CD4-positive, alpha-beta memory T cell (primary cell): ENCODE measurements at regions of chr17 and their contacts with region 1.

Region 1: DNA sequence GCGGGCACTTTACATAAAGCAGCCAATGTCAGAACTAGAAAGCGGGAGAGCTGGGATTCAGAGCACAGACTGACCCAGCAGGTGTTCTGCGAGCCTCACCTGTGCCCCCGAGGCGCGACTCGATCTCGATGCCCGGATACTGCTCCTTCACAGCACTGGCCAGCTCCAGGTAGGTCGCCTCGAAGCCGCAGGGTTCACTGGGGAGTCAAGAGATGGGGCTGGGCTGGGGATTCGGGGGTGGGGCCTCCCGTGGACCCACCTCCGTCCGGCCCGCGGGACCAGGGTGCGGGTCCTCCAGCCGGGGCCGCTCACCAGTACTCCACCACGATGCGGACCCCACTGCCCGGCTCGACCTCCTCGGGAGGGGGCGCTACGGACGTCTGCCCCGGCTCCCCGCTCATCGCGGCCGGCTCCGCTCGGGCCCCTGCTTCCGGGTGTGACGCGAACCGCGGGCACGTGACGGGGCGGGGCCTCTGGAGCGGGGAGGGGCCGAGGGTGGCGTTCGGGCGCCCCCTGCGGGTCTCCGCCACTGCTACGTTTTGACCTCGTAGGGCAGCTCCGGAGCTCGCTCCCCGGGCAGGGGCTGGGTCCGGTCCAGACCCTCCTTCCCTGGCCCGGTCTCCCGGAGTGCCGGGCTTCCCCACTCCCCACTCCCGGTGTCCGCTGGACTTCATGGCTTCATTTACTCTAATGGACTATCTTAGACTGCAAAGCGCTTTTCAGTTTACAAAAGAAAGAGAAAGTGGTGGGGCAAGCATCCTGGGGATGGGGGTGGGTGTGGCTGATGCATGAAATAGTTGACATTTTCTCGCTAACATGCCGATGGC is at the start of gene MIEN1:
- DNase-seq: peak; percentile 87 to 97 (median 93)
- H3K4me3 ChIP-seq: peak within 1 kb of the TSS; percentile 92 to 94
- H3K4me3 Mint-ChIP-seq: peak within 1 kb of the TSS; percentile 90 to 94 (median 92)
- H3K27ac ChIP-seq: peak within 1 kb of the TSS; percentile 91
- H3K27ac Mint-ChIP-seq: peak within 1 kb of the TSS; percentile 86 to 95 (median 93)
- H3K4me1 ChIP-seq: peaks cover 22% of the 10 kb centered on the region
- H3K4me1 Mint-ChIP-seq: peaks cover 6 to 33% (median 12%) of the 10 kb centered on the region in 4 donors
- H3K27me3 ChIP-seq: no peaks in the 10 kb centered on the region
- H3K27me3 Mint-ChIP-seq: no peaks in the 10 kb centered on the region
- total RNA-seq, gene MIEN1: 35.8 TPM

Region 2: GRCh38 chr17:38967290-38967738 is 763.0 kb before region 1 on chr17 and contains the start of gene FBXO47:
- CTCF ChIA-PET with region 1: no interaction called
- POLR2A ChIA-PET with region 1: no interaction called
- intact Hi-C with region 1: no loop called
- DNase-seq: peak; percentile 69 to 89 (median 77)
- H3K4me3 ChIP-seq: peak within 1 kb of the TSS in 1 of 2 donors; percentile 10
- H3K4me3 Mint-ChIP-seq: peak within 1 kb of the TSS; percentile 70 to 87 (median 81)
- H3K27ac ChIP-seq: no peak within 1 kb of the TSS
- H3K27ac Mint-ChIP-seq: peak within 1 kb of the TSS; percentile 74 to 90 (median 86)
- H3K4me1 ChIP-seq: peaks cover 7% of the 10 kb centered on the region
- H3K4me1 Mint-ChIP-seq: peaks cover 7 to 16% (median 12%) of the 10 kb centered on the region in 4 donors
- H3K27me3 ChIP-seq: no peaks in the 10 kb centered on the region
- H3K27me3 Mint-ChIP-seq: no peaks in the 10 kb centered on the region
- total RNA-seq, gene FBXO47: not detected

Region 3: DNA sequence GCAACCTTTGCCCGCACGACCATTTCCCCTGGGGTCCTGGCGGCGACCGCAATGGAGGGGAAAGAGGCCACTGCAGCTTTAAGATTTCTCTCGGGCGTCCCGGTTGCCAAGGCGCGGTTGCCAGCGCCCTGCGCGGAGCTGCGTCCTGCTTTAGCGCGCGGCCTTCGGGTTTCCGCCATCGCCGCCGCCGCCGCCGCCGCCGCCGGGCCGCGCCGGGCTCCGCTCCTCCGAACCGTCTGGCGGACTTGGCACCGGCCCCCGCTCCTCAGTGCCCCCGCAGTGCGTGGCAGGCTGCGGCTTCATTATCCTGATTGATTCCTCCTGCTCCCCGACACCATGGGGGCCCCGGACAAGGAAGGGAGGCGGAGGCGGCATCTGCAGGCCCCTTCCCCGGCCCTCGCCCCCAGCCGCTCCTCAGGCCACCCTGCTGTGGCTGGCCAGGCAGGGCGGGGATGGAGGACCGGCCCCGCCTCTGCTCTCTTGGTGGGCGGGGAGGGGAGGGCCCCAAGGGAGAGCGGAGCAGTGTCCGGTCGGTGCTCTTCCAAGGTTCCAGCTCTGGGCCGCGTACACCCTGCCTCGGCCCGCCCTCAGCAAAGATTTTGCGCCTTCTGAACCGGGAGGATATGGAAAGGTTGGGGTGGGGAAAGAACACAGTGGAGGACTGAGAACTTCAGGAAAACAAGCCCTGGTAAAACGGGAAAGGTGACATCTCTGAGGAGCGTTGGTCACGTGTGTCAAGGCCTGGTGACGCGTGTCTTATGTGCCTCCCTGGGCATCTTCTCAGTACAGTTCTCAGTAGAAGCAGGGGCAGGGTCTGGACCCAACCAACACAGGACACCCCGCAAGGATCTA is 156.6 kb before region 1 on chr17:
- CTCF ChIA-PET with region 1: no interaction called
- POLR2A ChIA-PET with region 1: no interaction called
- intact Hi-C with region 1: no loop called
- DNase-seq: peak in 3 of 5 donors; percentile 16 to 20 (median 19)
- H3K4me3 ChIP-seq: no peak overlapping the region
- H3K4me3 Mint-ChIP-seq: peak overlapping the region; percentile 73 to 89 (median 84)
- H3K27ac ChIP-seq: no peak overlapping the region
- H3K27ac Mint-ChIP-seq: peak overlapping the region in 5 of 7 donors; percentile 13 to 79 (median 61)
- H3K4me1 ChIP-seq: no peaks in the 10 kb centered on the region
- H3K4me1 Mint-ChIP-seq: peaks cover 0 to 13% (median 7%) of the 10 kb centered on the region in 4 donors
- H3K27me3 ChIP-seq: no peaks in the 10 kb centered on the region
- H3K27me3 Mint-ChIP-seq: no peaks in the 10 kb centered on the region

Region 4: DNA sequence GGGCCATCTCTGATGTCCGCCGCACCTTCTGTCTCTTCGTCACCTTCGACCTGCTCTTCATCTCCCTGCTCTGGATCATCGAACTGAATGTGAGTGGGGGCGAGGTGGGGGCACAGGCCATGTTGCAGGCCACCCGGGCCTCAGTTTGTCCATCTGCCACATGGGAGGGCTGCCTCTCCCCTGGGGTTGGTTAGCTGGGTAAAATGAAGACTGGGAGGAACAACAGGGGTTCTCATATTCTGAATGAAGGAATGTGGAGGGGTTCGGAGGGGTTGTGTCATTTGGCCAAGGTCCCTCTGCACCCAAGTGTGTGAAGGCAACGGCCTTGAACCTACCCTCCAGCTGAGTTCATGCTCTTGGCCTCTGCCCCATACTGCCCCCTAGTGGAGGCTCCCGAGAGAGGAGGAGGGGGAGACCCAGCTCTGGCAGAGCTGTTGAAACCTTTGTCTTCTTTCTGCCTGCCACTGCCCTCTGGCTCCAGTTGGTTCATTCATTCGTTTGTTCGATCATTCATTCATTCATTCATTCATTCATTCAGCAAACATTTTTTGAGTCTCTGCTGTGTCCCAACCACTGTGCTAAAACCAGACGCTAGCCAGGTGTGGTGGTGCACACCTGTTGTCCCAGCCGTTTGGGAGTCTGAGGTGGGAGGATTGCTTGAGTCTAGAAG is 76.5 kb before region 1 on chr17:
- CTCF ChIA-PET with region 1: interaction called, 30 read pairs
- POLR2A ChIA-PET with region 1: interaction called, 3 read pairs
- intact Hi-C with region 1: no loop called
- DNase-seq: peak; percentile 65 to 75 (median 73)
- H3K4me3 ChIP-seq: no peak overlapping the region
- H3K4me3 Mint-ChIP-seq: no peak overlapping the region
- H3K27ac ChIP-seq: no peak overlapping the region
- H3K27ac Mint-ChIP-seq: peak overlapping the region in 3 of 7 donors; percentile 69 to 78 (median 78)
- H3K4me1 ChIP-seq: peaks cover 10% of the 10 kb centered on the region
- H3K4me1 Mint-ChIP-seq: peaks cover 24 to 55% (median 27%) of the 10 kb centered on the region in 4 donors
- H3K27me3 ChIP-seq: no peaks in the 10 kb centered on the region
- H3K27me3 Mint-ChIP-seq: no peaks in the 10 kb centered on the region

Region 5: GRCh38 chr17:39676198-39676819 is 54.0 kb before region 1 on chr17:
- CTCF ChIA-PET with region 1: interaction called, 7 read pairs
- POLR2A ChIA-PET with region 1: interaction called, 21 read pairs
- intact Hi-C with region 1: no loop called
- DNase-seq: peak; percentile 54 to 72 (median 69)
- H3K4me3 ChIP-seq: no peak overlapping the region
- H3K4me3 Mint-ChIP-seq: peak overlapping the region in 7 of 8 donors; percentile 21 to 77 (median 70)
- H3K27ac ChIP-seq: peak overlapping the region; percentile 6
- H3K27ac Mint-ChIP-seq: peak overlapping the region; percentile 77 to 97 (median 92)
- H3K4me1 ChIP-seq: peaks cover 61% of the 10 kb centered on the region
- H3K4me1 Mint-ChIP-seq: peaks cover 44 to 70% (median 58%) of the 10 kb centered on the region in 4 donors
- H3K27me3 ChIP-seq: no peaks in the 10 kb centered on the region
- H3K27me3 Mint-ChIP-seq: no peaks in the 10 kb centered on the region

Region 6: DNA sequence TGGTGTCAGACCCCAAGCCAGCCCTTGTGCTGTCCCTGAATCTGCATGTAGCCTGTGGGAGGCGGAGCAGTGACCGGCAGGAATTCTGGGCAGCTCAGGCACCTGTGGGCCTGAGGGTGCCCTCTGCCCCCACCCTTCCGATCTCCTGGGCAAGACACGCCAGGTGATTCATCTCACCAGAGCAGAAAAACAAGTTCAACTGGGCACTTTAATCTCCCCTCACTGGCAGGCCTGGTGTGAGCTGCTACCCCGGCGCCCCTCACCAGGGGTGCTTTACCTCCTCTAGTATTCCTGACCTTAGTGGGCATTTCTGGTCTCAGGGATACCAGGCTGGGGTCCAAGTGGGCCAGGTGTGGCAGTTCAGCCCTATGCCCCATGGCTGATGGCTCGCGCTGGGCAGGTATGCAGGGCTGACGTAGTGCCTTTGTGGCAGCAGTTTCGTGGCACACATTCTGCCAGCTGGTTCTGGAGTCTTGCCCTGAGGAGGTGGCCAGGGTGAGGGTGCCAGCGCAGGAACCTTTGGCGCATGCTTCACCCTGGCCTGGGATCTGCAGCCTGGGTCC is 24.4 kb before region 1 on chr17:
- CTCF ChIA-PET with region 1: interaction called, 4 read pairs
- POLR2A ChIA-PET with region 1: interaction called, 10 read pairs
- intact Hi-C with region 1: no loop called
- DNase-seq: no peak
- H3K4me3 ChIP-seq: no peak overlapping the region
- H3K4me3 Mint-ChIP-seq: no peak overlapping the region
- H3K27ac ChIP-seq: no peak overlapping the region
- H3K27ac Mint-ChIP-seq: peak overlapping the region in 1 of 7 donors; percentile 70
- H3K4me1 ChIP-seq: peaks cover 20% of the 10 kb centered on the region
- H3K4me1 Mint-ChIP-seq: peaks cover 10 to 35% (median 22%) of the 10 kb centered on the region in 4 donors
- H3K27me3 ChIP-seq: no peaks in the 10 kb centered on the region
- H3K27me3 Mint-ChIP-seq: peaks cover 8 to 13% of the 10 kb centered on the region in 2 donors